ENCODE measurements at regions of chr4 and their contacts with region 1.

Region 1: DNA sequence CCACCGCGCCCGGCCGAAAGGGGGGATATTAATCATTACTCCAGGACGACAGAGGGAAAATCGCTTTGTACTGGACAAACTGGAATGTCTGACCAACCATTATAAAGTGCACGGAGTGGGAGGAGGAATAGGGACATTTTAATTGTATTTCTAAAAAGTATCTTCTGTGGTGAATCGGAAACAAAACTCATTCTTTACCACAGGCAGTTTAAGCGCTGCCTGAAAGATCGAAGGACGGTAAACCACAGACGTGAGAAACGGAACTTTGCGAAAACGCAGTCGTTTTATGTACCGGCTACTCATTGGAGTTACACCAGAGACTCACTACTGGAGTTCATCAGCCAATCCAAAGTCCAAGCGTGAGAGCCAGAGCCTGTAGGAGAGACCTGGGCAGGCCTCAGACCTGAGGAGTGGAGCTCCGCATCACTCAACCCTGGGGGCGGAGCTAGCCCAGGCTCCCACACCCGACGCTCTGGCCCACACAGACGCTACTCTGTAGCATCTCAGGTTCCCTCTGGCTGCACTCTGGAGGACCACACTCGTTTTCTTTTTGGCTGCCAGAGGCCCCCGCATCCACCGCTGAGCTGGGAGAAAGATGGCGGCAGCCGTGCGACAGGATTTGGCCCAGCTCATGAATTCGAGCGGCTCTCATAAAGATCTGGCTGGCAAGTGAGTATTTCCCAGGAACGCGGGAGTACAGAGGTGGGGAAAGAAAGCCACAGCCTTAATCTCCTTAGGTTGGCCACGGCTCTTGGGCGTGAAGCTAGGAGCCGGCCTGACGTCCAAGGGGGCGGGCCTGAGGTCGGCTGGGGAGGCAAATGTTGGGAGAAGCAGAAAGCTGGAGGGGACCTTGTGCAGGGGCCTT is at the start of gene COPS4:
- DNase-seq: peak; percentile 99
- H3K4me3 ChIP-seq: peak within 1 kb of the TSS; percentile 73
- H3K27me3 ChIP-seq: peaks cover 3% of the 10 kb centered on the region; the same call in 1 of the 2 replicates
- CTCF ChIP-seq: peak; percentile 64
- polyA plus RNA-seq, gene COPS4: 70.2 and 87.7 TPM in 2 replicates

Region 2: DNA sequence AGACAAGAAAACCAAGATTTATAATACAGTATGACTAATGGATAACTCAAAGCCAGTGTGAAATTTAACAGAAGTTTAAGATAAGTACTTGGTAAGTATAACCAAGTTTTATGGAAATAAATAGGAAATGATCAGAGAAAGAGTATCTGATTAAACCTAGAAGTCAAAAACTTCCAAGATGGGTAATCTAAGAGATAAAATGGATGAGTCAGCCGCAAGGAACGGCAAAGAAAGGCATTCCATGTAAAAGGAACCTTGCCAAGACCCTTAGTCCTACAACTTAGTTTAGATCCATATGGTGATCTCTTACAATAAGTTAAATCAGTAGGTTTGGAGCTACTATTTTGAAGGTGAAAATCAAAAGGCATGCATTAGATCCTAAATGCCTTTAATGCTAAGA is 59.1 kb before region 1 on chr4:
- CTCF ChIA-PET with region 1: no interaction called
- POLR2A ChIA-PET with region 1: no interaction called
- DNase-seq: peak; percentile 6
- H3K4me3 ChIP-seq: no peak overlapping the region
- H3K27me3 ChIP-seq: no peaks in the 10 kb centered on the region
- CTCF ChIP-seq: no peak

Region 3: GRCh38 chr4:82989575-82990429 is 45.1 kb before region 1 on chr4:
- CTCF ChIA-PET with region 1: no interaction called
- POLR2A ChIA-PET with region 1: interaction called, 12 read pairs
- DNase-seq: no peak
- H3K4me3 ChIP-seq: no peak overlapping the region
- H3K27me3 ChIP-seq: no peaks in the 10 kb centered on the region
- CTCF ChIP-seq: no peak

Region 4: DNA sequence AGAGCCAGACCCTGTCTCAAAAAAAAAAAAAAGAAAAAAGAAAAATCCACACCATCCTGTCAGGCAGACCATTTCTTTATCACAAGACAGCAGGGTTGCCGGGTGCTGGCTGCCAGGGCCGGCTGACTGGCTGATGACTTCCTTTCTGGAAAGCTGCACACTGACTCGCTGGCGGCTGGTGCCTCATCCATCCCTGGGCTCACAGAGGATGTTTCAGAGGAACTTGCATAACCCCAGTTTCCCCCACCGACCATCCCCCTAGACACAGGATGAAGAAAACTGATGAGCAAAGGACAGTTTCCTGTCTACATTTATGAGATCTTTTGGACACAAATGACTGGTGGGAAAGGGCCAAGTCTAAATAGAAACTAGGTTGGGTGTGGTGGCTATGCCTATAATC is 285.7 kb after region 1 on chr4:
- CTCF ChIA-PET with region 1: no interaction called
- POLR2A ChIA-PET with region 1: no interaction called
- DNase-seq: peak; percentile 4
- H3K4me3 ChIP-seq: no peak overlapping the region
- H3K27me3 ChIP-seq: no peaks in the 10 kb centered on the region
- CTCF ChIP-seq: no peak